GM10248 (cell line): ENCODE measurements at regions of chr10 and their contacts with region 1.

Region 1: GRCh38 chr10:28628184-28628893 is 49.0 kb upstream of the BAMBI start:
- DNase-seq: peak; percentile 71
- CTCF ChIP-seq: peak; percentile 90

Region 2: GRCh38 chr10:27857616-27858015 is 770.7 kb before region 1 on chr10:
- CTCF ChIA-PET with region 1: no interaction called
- POLR2A ChIA-PET with region 1: no interaction called
- DNase-seq: no peak
- CTCF ChIP-seq: no peak

Region 3: GRCh38 chr10:28564905-28565304 is 63.4 kb before region 1 on chr10:
- CTCF ChIA-PET with region 1: no interaction called
- POLR2A ChIA-PET with region 1: no interaction called
- DNase-seq: no peak
- CTCF ChIP-seq: no peak

Region 4: DNA sequence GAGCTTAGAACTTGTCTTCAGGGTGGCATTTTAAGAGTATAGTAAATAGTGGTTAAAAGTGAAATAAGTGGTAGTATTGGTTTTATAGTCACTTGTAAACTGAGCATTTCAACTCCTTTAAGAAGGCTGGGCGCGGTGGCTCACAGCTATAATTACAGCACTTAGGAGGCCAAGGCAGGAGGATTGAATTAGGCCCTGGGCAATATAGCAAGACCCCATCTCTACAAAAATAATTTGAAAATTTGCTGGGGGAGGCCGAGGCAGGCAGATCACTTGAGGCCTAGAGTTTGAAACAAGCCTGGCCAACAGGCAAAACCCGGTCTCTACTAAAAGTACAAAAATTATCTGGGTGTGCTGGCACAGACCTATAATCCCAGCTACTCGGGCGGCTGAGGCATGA is 15.5 kb before region 1 on chr10:
- CTCF ChIA-PET with region 1: interaction called, 23 read pairs
- POLR2A ChIA-PET with region 1: no interaction called
- DNase-seq: no peak
- CTCF ChIP-seq: no peak

Region 5: DNA sequence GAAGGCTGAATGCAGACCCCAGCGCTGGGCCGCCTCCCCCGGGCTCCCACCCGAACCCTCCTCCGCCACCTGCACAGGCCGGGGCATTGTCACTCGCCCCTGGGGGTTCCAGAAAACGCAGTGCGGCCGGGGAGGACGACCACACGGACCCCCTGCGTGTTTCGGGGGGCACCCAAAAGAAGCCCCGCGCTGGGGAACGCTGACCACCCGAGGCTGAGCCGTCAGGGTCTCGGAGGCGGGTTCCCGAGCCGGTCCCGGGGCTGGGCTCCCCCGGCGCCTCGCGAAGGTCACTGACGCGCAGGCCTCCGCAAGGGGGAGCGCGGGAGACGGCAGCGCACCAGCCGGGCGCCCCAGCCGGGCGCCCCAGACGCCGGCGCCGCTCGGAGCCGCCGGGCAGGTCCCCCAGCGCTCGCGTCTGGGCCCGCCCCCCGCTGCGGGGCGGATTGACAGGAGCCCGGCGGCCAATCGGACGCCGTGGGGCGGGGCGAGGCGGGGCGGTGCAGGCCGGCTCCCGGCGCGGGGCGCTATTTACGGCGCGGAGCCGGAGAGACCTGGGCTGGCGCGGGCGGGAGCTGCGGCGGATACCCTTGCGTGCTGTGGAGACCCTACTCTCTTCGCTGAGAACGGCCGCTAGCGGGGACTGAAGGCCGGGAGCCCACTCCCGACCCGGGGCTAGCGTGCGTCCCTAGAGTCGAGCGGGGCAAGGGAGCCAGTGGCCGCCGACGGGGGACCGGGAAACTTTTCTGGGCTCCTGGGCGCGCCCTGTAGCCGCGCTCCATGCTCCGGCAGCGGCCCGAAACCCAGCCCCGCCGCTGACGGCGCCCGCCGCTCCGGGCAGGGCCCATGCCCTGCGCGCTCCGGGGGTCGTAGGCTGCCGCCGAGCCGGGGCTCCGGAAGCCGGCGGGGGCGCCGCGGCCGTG is 48.9 kb after region 1 on chr10 and contains the start of gene BAMBI:
- CTCF ChIA-PET with region 1: no interaction called
- POLR2A ChIA-PET with region 1: no interaction called
- DNase-seq: peak; percentile 92
- CTCF ChIP-seq: peak; percentile 82

Region 6: GRCh38 chr10:29304264-29305030 is 676.1 kb after region 1 on chr10:
- CTCF ChIA-PET with region 1: interaction called, 14 read pairs
- POLR2A ChIA-PET with region 1: no interaction called
- DNase-seq: peak; percentile 60
- CTCF ChIP-seq: peak; percentile 86